Activated CD8-positive, alpha-beta T cell treated with anti-CD3 and anti-CD28 coated beads for 36 hours (primary cell): ENCODE measurements at regions of chr4 and their contacts with region 1.

Region 1: GRCh38 chr4:55312489-55313101 is 33.4 kb upstream of the SRD5A3 start:
- DNase-seq: peak; percentile 55
- ATAC-seq: peak; percentile 64
- H3K4me3 Mint-ChIP-seq: no peak overlapping the region
- H3K27ac Mint-ChIP-seq: no peak overlapping the region
- H3K4me1 Mint-ChIP-seq: peaks cover 6% of the 10 kb centered on the region
- H3K27me3 Mint-ChIP-seq: no peaks in the 10 kb centered on the region
- CTCF ChIP-seq: peak; percentile 59

Region 2: DNA sequence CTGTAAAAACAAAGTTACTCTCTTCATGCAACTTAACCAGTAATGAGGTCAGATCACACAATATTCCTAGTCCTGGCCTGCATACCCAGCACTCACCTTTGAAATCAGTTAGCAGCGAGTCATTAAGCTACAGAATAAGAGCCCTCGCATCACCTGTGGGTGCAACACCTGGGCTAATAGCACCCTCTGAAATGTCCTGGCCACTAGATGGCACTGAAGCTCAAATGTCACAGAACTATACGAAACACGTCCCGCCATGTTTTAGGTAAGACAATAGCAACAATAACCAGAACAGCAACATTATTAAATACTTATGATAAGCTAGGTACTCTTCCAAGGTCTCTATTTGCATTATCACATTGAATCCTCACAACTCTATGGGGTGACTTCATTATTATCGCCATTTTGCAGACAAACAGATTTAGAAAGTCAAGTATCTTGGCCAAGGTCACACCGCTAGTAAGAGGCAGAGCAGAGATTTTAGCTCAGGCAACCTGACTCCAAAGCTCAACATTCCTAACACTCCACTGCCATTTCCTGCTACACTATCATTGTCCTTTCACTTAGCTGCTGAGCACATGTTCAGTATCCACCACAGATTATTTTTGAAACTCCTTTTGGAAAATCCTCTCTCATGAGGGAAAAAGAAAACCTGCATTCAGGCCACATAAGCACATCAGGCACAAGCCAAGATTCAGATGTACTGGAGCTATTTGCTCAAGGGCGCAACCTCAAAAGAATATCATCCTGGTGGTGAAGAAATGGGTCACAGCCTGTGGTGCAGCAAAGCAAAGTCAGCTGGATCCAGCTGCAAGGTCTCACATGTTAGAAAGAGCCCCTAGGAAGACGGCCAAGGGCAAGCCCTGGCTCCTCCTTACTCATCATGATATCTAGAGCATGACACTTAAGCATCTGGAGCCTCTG is 127.7 kb before region 1 on chr4:
- CTCF ChIA-PET with region 1: interaction called, 7 read pairs
- POLR2A ChIA-PET with region 1: no interaction called
- intact Hi-C with region 1: loop called (anchors 10 kb)
- DNase-seq: peak; percentile 50
- ATAC-seq: peak; percentile 30
- H3K4me3 Mint-ChIP-seq: no peak overlapping the region
- H3K27ac Mint-ChIP-seq: no peak overlapping the region
- H3K4me1 Mint-ChIP-seq: peaks cover 6% of the 10 kb centered on the region
- H3K27me3 Mint-ChIP-seq: peaks cover 11% of the 10 kb centered on the region
- CTCF ChIP-seq: peak; percentile 36